OCI-LY7 (cell line): ENCODE measurements at regions of chr9 and their contacts with region 1.

Region 1: DNA sequence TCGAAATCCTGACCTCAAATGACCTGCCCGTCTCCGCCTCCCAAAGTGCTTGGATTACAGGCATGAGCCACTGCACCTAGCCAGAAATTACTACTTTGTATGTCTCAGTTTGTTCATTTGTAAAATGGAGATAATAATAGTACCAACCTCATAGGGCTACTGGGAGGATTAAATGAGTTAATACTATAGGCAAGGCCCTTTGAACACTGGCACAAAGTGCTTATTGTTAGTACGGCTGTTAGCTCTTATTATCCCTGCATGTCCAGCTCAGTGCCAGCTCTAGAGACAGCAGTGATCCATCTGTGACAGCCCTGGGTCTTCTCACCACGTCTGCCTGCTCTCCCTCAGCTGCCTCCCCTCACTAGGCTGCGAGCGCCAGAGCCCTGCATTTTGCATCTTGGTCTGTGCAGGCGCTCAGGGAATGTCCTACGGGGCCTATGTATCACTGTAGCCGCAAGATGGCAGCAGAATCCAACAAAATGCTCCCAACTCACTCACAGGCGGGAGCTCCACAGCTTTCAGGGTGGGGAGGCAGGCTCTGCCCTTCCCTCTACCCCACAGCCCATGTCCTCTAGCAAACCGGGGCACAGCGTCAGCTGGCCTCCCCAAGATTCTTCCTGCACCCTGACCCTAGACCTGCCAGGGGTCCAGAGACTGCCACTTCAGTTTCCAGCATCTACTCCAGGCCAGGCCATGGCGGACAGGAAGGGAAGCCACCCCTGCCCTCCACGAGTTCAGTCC is 17.7 kb upstream of the AKNA start:
- DNase-seq: peak; percentile 90
- H3K4me3 ChIP-seq: no peak overlapping the region
- H3K27ac ChIP-seq: no peak overlapping the region
- H3K4me1 ChIP-seq: no peaks in the 10 kb centered on the region
- CTCF ChIP-seq: peak; percentile 89

Region 2: DNA sequence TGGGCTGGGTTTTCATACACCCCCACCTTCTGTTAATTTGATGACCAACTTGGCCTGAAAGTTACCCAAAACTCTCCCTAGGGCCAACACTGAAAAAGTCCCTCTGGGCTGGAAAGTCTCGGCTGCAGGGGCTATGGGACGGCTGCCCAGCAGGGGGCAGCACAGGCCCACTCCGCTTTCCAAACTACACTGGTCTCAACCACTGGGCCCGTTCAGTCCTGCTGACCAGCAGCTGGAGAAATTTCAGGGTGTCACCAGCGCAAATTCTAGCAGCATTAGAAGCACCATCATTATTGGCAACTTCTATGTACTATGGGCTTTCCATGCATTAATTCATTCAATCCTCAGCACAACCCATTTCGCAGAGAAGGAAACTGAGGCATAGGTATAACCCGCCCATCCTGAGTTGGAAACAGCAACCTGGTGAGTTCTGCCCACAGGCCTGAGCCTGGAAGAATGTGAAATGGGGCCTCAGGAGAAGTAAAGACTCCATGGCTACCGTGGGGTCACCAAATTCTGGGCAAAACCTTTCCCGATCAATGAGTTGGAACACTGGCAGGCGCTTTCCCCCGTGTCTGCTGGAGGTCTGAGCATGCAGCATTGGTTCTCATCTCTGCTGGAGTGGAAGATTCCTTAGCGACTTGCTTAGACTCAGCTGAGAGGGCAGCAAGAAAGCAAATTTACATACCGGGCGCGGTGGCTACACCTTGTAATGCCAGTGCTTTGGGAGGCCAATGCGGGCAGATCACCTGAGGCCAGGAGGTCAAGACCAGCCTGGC is 66.1 kb before region 1 on chr9:
- CTCF ChIA-PET with region 1: no interaction called
- POLR2A ChIA-PET with region 1: no interaction called
- intact Hi-C with region 1: loop called (anchors 2 kb)
- DNase-seq: peak; percentile 71
- H3K4me3 ChIP-seq: no peak overlapping the region
- H3K27ac ChIP-seq: no peak overlapping the region
- H3K4me1 ChIP-seq: peaks cover 4% of the 10 kb centered on the region
- CTCF ChIP-seq: peak; percentile 99

Region 3: DNA sequence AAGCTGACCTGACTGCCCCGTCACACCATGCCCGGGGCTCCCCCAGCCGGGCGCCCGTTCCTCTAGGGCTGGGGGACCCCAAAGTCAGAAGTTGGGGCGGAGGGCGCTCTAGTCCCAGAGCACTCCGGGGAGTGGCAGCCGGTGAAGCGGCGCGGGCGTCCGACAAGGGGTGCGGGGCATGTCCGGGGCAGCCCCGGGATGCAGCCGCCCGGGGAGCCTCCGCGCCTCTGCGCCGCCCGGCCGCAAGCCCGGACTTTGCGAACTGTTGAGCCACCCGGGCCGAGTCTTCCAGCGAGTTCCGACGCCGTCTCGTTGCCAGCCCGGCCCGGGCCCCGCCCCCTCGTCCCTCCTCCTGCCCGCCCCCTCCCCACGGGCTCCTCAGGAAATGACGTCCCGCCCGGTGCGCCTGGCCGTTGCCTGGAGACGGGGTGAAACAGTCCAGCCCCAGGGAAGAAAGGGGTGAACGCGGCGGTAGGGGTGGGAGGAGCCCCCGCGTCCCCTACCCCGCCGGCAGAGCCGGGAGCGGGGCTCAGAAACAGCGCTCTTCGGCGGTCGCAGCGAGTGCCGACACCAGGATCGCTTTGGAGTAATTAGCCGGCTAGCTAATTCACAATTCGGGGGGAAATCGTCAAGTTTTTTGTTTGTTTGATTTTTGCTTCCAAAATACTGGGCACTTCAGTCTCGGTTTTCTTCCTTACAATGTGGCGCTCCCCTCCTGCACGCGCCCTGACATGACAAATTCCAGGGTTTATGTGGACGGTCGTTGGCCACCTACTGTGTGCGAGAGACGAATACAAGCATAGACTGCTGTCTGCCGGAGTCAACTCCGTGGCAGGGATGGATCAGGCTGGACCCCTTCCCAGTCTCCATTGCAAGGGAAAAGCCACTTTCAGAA is 100.0 kb after region 1 on chr9 and contains the start of gene WHRN:
- CTCF ChIA-PET with region 1: interaction called, 3 read pairs
- POLR2A ChIA-PET with region 1: interaction called, 3 read pairs
- intact Hi-C with region 1: loop called (anchors 2 kb)
- DNase-seq: peak; percentile 82
- H3K4me3 ChIP-seq: peak within 1 kb of the TSS; percentile 66
- H3K27ac ChIP-seq: no peak within 1 kb of the TSS
- H3K4me1 ChIP-seq: peaks cover 28% of the 10 kb centered on the region
- CTCF ChIP-seq: no peak
- total RNA-seq, gene WHRN: 0.19 TPM in 1 of 2 replicates, not detected in the other

Region 4: GRCh38 chr9:114653556-114654159 is 248.2 kb after region 1 on chr9:
- CTCF ChIA-PET with region 1: interaction called, 7 read pairs
- POLR2A ChIA-PET with region 1: interaction called, 4 read pairs
- intact Hi-C with region 1: loop called (anchors 1 kb)
- DNase-seq: peak; percentile 83
- H3K4me3 ChIP-seq: no peak overlapping the region
- H3K27ac ChIP-seq: no peak overlapping the region
- H3K4me1 ChIP-seq: peaks cover 24% of the 10 kb centered on the region
- CTCF ChIP-seq: peak; percentile 97

Region 5: DNA sequence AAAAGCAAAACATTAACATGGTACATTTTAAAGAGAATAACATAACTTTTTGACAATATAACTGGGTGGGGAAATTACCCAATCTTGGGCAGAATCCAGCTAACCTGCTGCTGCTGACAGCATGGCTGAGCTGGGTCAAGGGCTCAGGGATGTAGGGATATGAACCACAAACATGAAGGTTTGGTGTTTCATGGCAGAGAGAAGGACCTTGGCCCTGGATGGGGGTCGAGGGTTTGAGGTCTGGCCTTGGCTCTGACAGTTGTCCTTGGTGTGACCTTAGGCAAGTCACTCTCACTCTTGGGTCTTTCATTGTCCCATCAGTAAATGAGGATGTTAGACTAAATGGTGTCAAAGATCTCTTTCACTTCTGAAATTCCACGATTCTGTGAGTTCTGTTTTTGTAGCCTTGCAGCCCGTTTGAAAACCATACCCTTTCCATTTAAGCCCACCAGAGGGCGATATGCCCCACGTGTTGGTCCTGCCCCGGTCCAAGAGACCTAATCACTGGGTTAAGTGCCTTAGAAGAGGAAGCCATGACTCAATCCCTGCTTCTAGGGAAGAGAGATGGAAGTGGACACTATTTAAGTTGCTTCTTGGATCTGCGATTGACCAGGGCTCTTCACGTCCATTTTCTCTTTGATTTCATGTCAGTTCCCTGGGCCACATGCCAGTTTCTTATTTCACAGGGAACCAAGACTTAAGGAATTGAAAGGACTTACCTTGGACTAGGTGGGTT is 333.3 kb after region 1 on chr9:
- CTCF ChIA-PET with region 1: no interaction called
- POLR2A ChIA-PET with region 1: no interaction called
- intact Hi-C with region 1: loop called (anchors 5 kb)
- DNase-seq: peak; percentile 78
- H3K4me3 ChIP-seq: no peak overlapping the region
- H3K27ac ChIP-seq: no peak overlapping the region
- H3K4me1 ChIP-seq: no peaks in the 10 kb centered on the region
- CTCF ChIP-seq: peak; percentile 98